Heart left ventricle (tissue), 16 donors: ENCODE measurements at regions of chr4 and their contacts with region 1.

Region 1: DNA sequence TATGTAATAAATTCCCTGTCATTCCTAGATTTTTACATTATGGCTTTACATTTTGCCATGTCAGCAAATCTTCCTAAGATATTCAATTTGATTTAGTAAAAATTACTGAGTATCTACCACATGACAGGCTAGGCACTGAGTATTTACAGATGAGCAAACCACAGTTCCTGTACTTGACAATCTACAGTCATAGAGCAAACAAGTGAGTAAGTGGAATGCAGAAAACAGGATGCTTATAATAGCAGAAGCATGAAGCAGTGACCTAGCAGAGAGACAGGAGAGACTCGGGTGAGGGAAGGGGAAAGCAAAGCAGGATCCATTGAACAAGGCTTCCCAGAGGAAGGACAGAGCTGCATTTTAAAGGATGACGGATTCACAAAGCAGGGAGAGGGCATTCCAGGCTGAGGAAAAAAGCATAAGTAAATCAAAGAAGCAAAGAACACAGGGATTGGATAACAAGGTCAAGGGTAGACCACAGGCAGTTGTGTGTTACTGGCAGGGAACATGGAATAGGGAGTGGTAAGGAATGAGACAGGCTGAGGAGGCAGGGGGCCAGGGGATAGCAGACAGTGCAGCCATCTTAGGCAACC is 124.7 kb upstream of the C1QTNF7 start:
- DNase-seq: no peak
- ATAC-seq: peak in 1 of 4 donors; percentile 62
- H3K4me3 ChIP-seq: no peak overlapping the region
- H3K27ac ChIP-seq: peak overlapping the region in 2 of 12 donors; percentile 23 to 26
- H3K4me1 ChIP-seq: peaks cover 0 to 11% (median 0%) of the 10 kb centered on the region in 12 donors
- H3K27me3 ChIP-seq: no peaks in the 10 kb centered on the region
- CTCF ChIP-seq: no peak
- POLR2A ChIP-seq: no peak

Region 2: DNA sequence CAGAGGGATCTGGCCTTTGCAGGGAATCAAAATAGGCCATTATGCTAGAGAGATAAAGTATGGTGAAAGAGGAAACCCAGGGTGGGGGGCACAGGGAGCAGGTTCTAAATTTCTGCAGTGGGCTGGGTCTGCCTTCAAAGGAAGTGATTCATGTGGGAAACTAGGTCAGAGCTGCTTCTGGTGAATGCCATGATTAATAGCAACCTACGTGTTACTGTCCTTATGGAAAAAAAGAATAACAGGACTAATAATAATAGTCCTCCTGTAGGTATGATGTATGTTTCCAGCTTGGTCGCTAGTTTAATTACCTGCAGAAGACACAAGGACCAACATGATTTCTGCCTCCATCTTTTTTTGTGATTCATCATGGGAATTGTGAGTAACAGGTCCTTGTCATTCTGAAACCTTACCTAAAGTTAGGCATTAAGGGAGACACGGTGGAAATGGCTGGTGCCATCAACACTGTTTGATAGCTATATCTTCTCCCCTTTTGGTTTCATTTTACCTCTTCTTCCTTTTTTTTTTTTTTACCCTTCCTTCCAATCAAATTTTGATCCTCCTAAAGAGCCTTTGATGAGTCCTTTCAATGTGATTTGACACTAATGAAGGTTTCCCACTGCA is 120.4 kb before region 1 on chr4:
- intact Hi-C with region 1: no loop called
- DNase-seq: no peak
- ATAC-seq: no peak
- H3K4me3 ChIP-seq: no peak overlapping the region
- H3K27ac ChIP-seq: no peak overlapping the region
- H3K4me1 ChIP-seq: peaks cover 0 to 12% (median 0%) of the 10 kb centered on the region in 12 donors
- H3K27me3 ChIP-seq: no peaks in the 10 kb centered on the region
- CTCF ChIP-seq: no peak
- POLR2A ChIP-seq: no peak

Region 3: GRCh38 chr4:15322006-15322405 is 18.9 kb after region 1 on chr4:
- intact Hi-C with region 1: loop called in 1 of 10 experiments (anchors 2 kb)
- DNase-seq: no peak
- ATAC-seq: no peak
- H3K4me3 ChIP-seq: no peak overlapping the region
- H3K27ac ChIP-seq: no peak overlapping the region
- H3K4me1 ChIP-seq: no peaks in the 10 kb centered on the region
- H3K27me3 ChIP-seq: no peaks in the 10 kb centered on the region
- CTCF ChIP-seq: no peak
- POLR2A ChIP-seq: no peak